Mammary epithelial cell (primary cell): ENCODE measurements at regions of chr18 and their contacts with region 1.

Region 1: DNA sequence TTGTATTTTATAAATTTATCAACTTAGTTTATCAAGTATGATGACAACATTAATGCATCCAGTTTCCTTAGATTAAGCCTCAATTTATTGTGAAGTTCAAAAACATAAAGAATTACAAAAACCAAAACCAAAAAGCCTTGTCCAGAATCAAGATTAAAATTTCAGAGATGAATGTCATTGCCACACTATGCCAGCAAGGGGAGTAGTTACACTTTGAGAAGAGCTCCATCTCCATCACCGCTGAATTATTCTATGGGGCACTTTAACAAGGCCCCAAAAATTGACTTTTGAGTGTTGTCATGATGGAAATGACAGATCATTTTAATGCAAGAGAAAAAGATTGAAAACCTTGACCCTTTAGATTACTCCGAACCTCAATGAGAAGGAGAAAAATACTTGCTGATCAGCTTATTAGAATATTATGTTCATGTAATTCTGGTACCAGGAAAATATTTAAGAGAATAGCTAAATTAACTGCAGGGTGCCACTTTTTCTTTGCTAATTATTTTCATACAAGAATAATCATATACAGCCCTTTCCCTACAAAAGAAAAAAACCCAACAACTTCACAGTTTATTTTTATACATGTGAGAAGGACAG is 152.5 kb upstream of the AQP4 start:
- DNase-seq: peak; percentile 11
- H3K4me3 ChIP-seq: no peak overlapping the region
- H3K27ac ChIP-seq: no peak overlapping the region
- H3K4me1 ChIP-seq: no peaks in the 10 kb centered on the region
- H3K27me3 ChIP-seq: peaks cover 2% of the 10 kb centered on the region
- CTCF ChIP-seq: peak; percentile 66 to 76

Region 2: DNA sequence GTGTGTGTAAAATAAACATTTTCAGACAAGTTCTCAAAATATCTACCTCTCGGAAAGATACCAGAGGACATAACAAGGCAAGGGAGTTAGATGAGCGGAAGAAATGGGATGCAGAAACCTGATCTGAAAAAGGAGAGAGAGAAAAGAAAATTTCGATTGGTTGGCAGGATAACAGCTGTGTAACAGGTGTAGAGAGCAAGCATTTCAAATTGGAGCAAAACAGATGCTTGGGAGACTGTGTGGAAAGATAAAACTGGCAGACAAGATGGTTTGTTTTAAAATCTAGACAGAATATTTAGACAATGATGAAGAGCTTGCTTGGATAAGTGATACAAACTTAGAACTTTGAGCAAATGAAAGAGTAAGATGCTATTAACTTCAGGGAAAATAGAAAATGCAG is 146.9 kb after region 1 on chr18:
- CTCF ChIA-PET with region 1: no interaction called
- dilution Hi-C with region 1: no loop called
- in situ Hi-C with region 1: no loop called
- intact Hi-C with region 1: loop called (anchors 1 kb)
- DNase-seq: no peak
- H3K4me3 ChIP-seq: no peak overlapping the region
- H3K27ac ChIP-seq: no peak overlapping the region
- H3K4me1 ChIP-seq: no peaks in the 10 kb centered on the region
- H3K27me3 ChIP-seq: peaks cover 2% of the 10 kb centered on the region
- CTCF ChIP-seq: no peak

Region 3: GRCh38 chr18:27298214-27298804 is 280.3 kb after region 1 on chr18:
- CTCF ChIA-PET with region 1: interaction called, 3 read pairs
- dilution Hi-C with region 1: no loop called
- in situ Hi-C with region 1: loop called in 1 of 2 experiments (anchors 5 kb)
- intact Hi-C with region 1: loop called (anchors 1 kb)
- DNase-seq: peak; percentile 8
- H3K4me3 ChIP-seq: no peak overlapping the region
- H3K27ac ChIP-seq: no peak overlapping the region
- H3K4me1 ChIP-seq: no peaks in the 10 kb centered on the region
- H3K27me3 ChIP-seq: no peaks in the 10 kb centered on the region
- CTCF ChIP-seq: peak; percentile 44 to 66

Region 4: DNA sequence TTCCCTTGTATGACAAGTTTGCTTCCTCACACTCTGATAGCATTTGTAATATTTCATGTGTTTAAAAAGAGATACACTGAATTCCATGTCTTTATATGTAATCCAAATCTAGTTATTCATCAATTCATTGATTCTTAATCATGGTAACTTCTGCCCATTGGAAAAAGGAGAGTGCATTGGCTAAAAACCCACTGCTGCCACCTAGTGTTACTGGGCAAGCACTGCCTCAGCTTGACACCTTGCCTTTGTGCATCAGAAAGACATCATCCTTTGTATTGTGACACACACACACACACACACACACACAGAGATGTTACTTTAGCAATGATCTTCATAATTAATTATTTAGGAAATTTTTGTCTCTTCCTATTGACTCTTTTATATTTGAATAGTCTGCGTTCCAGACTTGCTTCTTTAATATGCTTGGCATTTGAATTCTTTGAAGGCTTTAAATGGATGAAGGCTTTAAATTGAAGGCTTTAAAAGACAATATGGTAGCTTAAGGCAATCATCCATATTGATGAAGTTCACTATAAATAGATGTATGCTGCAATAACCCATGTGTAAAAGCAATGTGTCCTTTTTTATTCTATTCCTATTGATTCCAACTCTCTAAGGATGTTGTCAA is 581.3 kb after region 1 on chr18:
- CTCF ChIA-PET with region 1: interaction called, 3 read pairs
- dilution Hi-C with region 1: no loop called
- in situ Hi-C with region 1: no loop called
- intact Hi-C with region 1: loop called (anchors 1 kb)
- DNase-seq: peak; percentile 41
- H3K4me3 ChIP-seq: no peak overlapping the region
- H3K27ac ChIP-seq: no peak overlapping the region
- H3K4me1 ChIP-seq: no peaks in the 10 kb centered on the region
- H3K27me3 ChIP-seq: no peaks in the 10 kb centered on the region
- CTCF ChIP-seq: peak; percentile 96 to 99